B cell (primary cell): ENCODE measurements at regions of chr3 and their contacts with region 1.

Region 1: GRCh38 chr3:123028233-123028828 is 768 bp upstream of the SEMA5B start:
- DNase-seq: peak; percentile 71
- ATAC-seq: peak; percentile 25
- H3K4me3 ChIP-seq: peak overlapping the region; percentile 44 to 72 (median 57)
- H3K4me3 Mint-ChIP-seq: peak overlapping the region; percentile 94
- H3K27ac ChIP-seq: no peak overlapping the region
- H3K27ac Mint-ChIP-seq: no peak overlapping the region
- H3K4me1 ChIP-seq: peaks cover 21% of the 10 kb centered on the region in 2 donors
- H3K4me1 Mint-ChIP-seq: peaks cover 20% of the 10 kb centered on the region
- H3K27me3 ChIP-seq: peaks cover 0 to 71% (median 43%) of the 10 kb centered on the region in 4 experiments
- H3K27me3 Mint-ChIP-seq: peaks cover 49% of the 10 kb centered on the region
- CTCF ChIP-seq: peak; percentile 48

Region 2: GRCh38 chr3:122392868-122393844 is 635.2 kb before region 1 on chr3:
- CTCF ChIA-PET with region 1: interaction called, 26 read pairs
- POLR2A ChIA-PET with region 1: no interaction called
- intact Hi-C with region 1: loop called (anchors 2 kb)
- DNase-seq: peak; percentile 66
- ATAC-seq: no peak
- H3K4me3 ChIP-seq: no peak overlapping the region
- H3K4me3 Mint-ChIP-seq: no peak overlapping the region
- H3K27ac ChIP-seq: no peak overlapping the region
- H3K27ac Mint-ChIP-seq: no peak overlapping the region
- H3K4me1 ChIP-seq: no peaks in the 10 kb centered on the region
- H3K4me1 Mint-ChIP-seq: peaks cover 13% of the 10 kb centered on the region
- H3K27me3 ChIP-seq: no peaks in the 10 kb centered on the region
- H3K27me3 Mint-ChIP-seq: no peaks in the 10 kb centered on the region
- CTCF ChIP-seq: peak; percentile 94

Region 3: DNA sequence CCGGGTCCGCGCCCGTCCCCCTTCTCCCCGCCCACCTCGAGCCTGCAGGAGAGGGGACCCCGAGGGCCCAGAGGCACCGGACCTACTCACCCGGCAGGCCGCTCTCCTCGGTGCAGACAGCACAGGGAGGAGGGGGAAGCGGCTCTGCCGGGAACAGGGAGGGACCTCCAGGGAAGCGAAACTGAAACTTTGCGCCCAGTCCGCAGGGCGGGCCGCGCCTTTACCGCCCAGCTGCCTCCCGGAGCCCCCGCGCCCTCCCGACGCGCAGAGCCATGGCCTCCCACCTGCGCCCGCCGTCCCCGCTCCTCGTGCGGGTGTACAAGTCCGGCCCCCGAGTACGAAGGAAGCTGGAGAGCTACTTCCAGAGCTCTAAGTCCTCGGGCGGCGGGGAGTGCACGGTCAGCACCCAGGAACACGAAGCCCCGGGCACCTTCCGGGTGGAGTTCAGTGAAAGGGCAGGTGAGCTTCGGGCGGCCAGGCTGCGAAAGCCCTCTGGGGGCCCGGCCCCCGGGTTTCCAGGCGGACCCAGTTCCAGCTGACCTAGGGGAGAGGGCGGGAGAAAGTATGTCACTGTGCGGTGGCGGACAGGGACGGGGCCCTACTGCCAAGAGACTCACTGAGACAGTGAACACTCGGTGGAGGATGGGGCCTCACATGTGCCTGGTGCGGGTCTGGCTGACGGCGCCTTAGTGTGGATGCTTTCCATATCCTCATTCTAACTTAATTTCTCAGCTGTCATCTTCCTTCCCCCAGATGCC is 464.0 kb before region 1 on chr3 and contains the starts of genes DTX3L and PARP9:
- CTCF ChIA-PET with region 1: interaction called, 17 read pairs
- POLR2A ChIA-PET with region 1: no interaction called
- intact Hi-C with region 1: loop called (anchors 1 kb)
- DNase-seq: peak; percentile 84
- ATAC-seq: peak; percentile 84
- H3K4me3 ChIP-seq: peak within 1 kb of the TSS; percentile 63 to 95 (median 89)
- H3K4me3 Mint-ChIP-seq: peak within 1 kb of the TSS; percentile 92
- H3K27ac ChIP-seq: peak within 1 kb of the TSS; percentile 91 to 92
- H3K27ac Mint-ChIP-seq: peak within 1 kb of the TSS; percentile 95
- H3K4me1 ChIP-seq: peaks cover 59 to 69% of the 10 kb centered on the region in 2 donors
- H3K4me1 Mint-ChIP-seq: peaks cover 77% of the 10 kb centered on the region
- H3K27me3 ChIP-seq: no peaks in the 10 kb centered on the region
- H3K27me3 Mint-ChIP-seq: no peaks in the 10 kb centered on the region
- CTCF ChIP-seq: no peak
- total RNA-seq, gene DTX3L: 41.1 and 44.0 TPM in 2 replicates
- total RNA-seq, gene PARP9: 29.8 and 31.2 TPM in 2 replicates

Region 4: DNA sequence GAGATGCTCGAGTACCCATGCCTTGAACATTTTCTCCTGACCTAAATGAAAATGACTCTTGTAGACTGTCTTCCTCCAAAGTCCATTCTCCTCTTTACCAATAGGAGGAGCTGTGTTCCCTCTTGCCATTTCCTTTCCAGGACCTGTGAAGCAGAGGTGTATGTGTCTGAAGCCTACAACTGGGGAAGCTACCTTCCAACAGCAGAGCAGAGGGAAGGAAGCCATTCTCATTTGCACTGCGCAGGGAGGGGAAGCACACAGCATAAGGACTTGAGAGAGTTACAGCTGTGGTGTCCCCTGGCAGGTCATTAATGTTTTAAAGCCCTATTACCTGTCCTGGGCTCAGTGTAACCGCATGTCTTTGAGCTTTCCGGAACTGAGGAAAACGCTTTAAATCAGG is 273.4 kb before region 1 on chr3:
- CTCF ChIA-PET with region 1: interaction called, 24 read pairs
- POLR2A ChIA-PET with region 1: no interaction called
- intact Hi-C with region 1: no loop called
- DNase-seq: peak; percentile 69
- ATAC-seq: peak; percentile 76
- H3K4me3 ChIP-seq: no peak overlapping the region
- H3K4me3 Mint-ChIP-seq: no peak overlapping the region
- H3K27ac ChIP-seq: no peak overlapping the region
- H3K27ac Mint-ChIP-seq: no peak overlapping the region
- H3K4me1 ChIP-seq: no peaks in the 10 kb centered on the region
- H3K4me1 Mint-ChIP-seq: no peaks in the 10 kb centered on the region
- H3K27me3 ChIP-seq: no peaks in the 10 kb centered on the region
- H3K27me3 Mint-ChIP-seq: no peaks in the 10 kb centered on the region
- CTCF ChIP-seq: peak; percentile 76

Region 5: GRCh38 chr3:122942937-122943827 is 85.1 kb before region 1 on chr3:
- CTCF ChIA-PET with region 1: interaction called, 24 read pairs
- POLR2A ChIA-PET with region 1: no interaction called
- intact Hi-C with region 1: loop called (anchors 1 kb)
- DNase-seq: peak; percentile 35
- ATAC-seq: peak; percentile 49
- H3K4me3 ChIP-seq: no peak overlapping the region
- H3K4me3 Mint-ChIP-seq: no peak overlapping the region
- H3K27ac ChIP-seq: no peak overlapping the region
- H3K27ac Mint-ChIP-seq: no peak overlapping the region
- H3K4me1 ChIP-seq: peaks cover 15 to 21% of the 10 kb centered on the region in 2 donors
- H3K4me1 Mint-ChIP-seq: peaks cover 16% of the 10 kb centered on the region
- H3K27me3 ChIP-seq: peaks cover 0 to 5% (median 1%) of the 10 kb centered on the region in 4 experiments
- H3K27me3 Mint-ChIP-seq: no peaks in the 10 kb centered on the region
- CTCF ChIP-seq: peak; percentile 74

Region 6: GRCh38 chr3:123015557-123015956 is 12.8 kb before region 1 on chr3:
- CTCF ChIA-PET with region 1: interaction called, 16 read pairs
- POLR2A ChIA-PET with region 1: no interaction called
- intact Hi-C with region 1: no loop called
- DNase-seq: no peak
- ATAC-seq: no peak
- H3K4me3 ChIP-seq: no peak overlapping the region
- H3K4me3 Mint-ChIP-seq: no peak overlapping the region
- H3K27ac ChIP-seq: no peak overlapping the region
- H3K27ac Mint-ChIP-seq: no peak overlapping the region
- H3K4me1 ChIP-seq: no peaks in the 10 kb centered on the region
- H3K4me1 Mint-ChIP-seq: no peaks in the 10 kb centered on the region
- H3K27me3 ChIP-seq: peaks cover 0 to 6% (median 2%) of the 10 kb centered on the region in 4 experiments
- H3K27me3 Mint-ChIP-seq: peaks cover 28% of the 10 kb centered on the region
- CTCF ChIP-seq: no peak

Region 7: GRCh38 chr3:123060054-123060453 is 31.7 kb after region 1 on chr3:
- CTCF ChIA-PET with region 1: no interaction called
- POLR2A ChIA-PET with region 1: no interaction called
- intact Hi-C with region 1: no loop called
- DNase-seq: no peak
- ATAC-seq: no peak
- H3K4me3 ChIP-seq: no peak overlapping the region
- H3K4me3 Mint-ChIP-seq: no peak overlapping the region
- H3K27ac ChIP-seq: no peak overlapping the region
- H3K27ac Mint-ChIP-seq: no peak overlapping the region
- H3K4me1 ChIP-seq: no peaks in the 10 kb centered on the region
- H3K4me1 Mint-ChIP-seq: no peaks in the 10 kb centered on the region
- H3K27me3 ChIP-seq: no peaks in the 10 kb centered on the region
- H3K27me3 Mint-ChIP-seq: no peaks in the 10 kb centered on the region
- CTCF ChIP-seq: no peak

Region 8: GRCh38 chr3:123267821-123268220 is 239.5 kb after region 1 on chr3:
- CTCF ChIA-PET with region 1: no interaction called
- POLR2A ChIA-PET with region 1: interaction called, 3 read pairs
- intact Hi-C with region 1: loop called (anchors 10 kb)
- DNase-seq: no peak
- ATAC-seq: no peak
- H3K4me3 ChIP-seq: no peak overlapping the region
- H3K4me3 Mint-ChIP-seq: no peak overlapping the region
- H3K27ac ChIP-seq: no peak overlapping the region
- H3K27ac Mint-ChIP-seq: peak overlapping the region; percentile 37
- H3K4me1 ChIP-seq: no peaks in the 10 kb centered on the region
- H3K4me1 Mint-ChIP-seq: no peaks in the 10 kb centered on the region
- H3K27me3 ChIP-seq: no peaks in the 10 kb centered on the region
- H3K27me3 Mint-ChIP-seq: no peaks in the 10 kb centered on the region
- CTCF ChIP-seq: no peak

Region 9: DNA sequence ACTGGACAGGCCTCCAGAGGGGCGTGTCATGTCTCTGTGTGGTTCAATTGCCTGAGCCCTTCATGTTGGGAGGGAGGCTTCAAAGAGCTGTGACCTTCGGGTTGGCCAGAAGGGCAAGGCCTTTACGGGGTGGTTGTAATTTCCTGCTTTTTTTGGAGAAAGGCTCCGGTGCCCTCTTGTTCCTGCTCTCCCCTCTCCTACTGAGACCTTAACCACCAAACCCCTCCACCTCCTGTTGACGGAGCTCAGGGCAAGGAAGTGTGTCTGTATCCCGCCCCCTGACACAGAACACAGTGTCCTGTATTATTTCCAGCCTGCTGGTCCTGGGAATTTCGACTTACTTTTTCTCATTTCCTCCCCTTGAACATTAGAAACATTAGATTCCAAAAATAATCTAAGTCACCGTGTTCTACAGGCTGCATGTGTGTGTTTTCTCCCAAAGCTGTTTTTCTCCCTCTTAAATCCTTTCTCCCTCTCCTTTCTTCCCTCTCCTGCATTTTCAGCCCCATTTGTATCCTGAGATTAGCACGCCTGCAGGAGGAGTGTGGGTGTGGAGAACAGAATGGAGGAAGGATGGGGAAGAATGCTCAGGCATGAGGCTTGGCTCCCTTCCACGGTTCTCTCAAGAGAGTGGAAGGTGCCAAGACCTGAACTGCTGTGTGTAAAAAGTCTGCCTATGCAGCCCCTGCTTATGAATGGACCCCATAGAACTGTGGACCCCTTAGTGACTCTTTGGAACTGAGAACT is 1249.0 kb after region 1 on chr3:
- CTCF ChIA-PET with region 1: no interaction called
- POLR2A ChIA-PET with region 1: no interaction called
- intact Hi-C with region 1: no loop called
- DNase-seq: no peak
- ATAC-seq: no peak
- H3K4me3 ChIP-seq: no peak overlapping the region
- H3K4me3 Mint-ChIP-seq: no peak overlapping the region
- H3K27ac ChIP-seq: no peak overlapping the region
- H3K27ac Mint-ChIP-seq: no peak overlapping the region
- H3K4me1 ChIP-seq: no peaks in the 10 kb centered on the region
- H3K4me1 Mint-ChIP-seq: no peaks in the 10 kb centered on the region
- H3K27me3 ChIP-seq: peaks cover 0 to 3% (median 0%) of the 10 kb centered on the region in 4 experiments
- H3K27me3 Mint-ChIP-seq: peaks cover 8% of the 10 kb centered on the region
- CTCF ChIP-seq: no peak